HEK293 (cell line): ENCODE measurements at regions of chr6 and their contacts with region 1.

Region 1: GRCh38 chr6:127641905-127642304 is 64.9 kb downstream of the C6orf58 start:
- H3K4me3 ChIP-seq: no peak overlapping the region
- H3K27ac ChIP-seq: no peak overlapping the region
- H3K4me1 ChIP-seq: no peaks in the 10 kb centered on the region
- CTCF ChIP-seq: 0 out of 2 replicates have a peak, but pooled peaks have one; percentile 33

Region 2: GRCh38 chr6:127547215-127547614 is 94.7 kb before region 1 on chr6:
- CTCF ChIA-PET with region 1: interaction called, 16 read pairs
- POLR2A ChIA-PET with region 1: no interaction called
- H3K4me3 ChIP-seq: no peak overlapping the region
- H3K27ac ChIP-seq: no peak overlapping the region
- H3K4me1 ChIP-seq: no peaks in the 10 kb centered on the region
- CTCF ChIP-seq: no peak

Region 3: GRCh38 chr6:127554435-127555006 is 87.4 kb before region 1 on chr6:
- CTCF ChIA-PET with region 1: interaction called, 16 read pairs
- POLR2A ChIA-PET with region 1: no interaction called
- H3K4me3 ChIP-seq: no peak overlapping the region
- H3K27ac ChIP-seq: no peak overlapping the region
- H3K4me1 ChIP-seq: no peaks in the 10 kb centered on the region
- CTCF ChIP-seq: peak; percentile 29; the same call in 1 of the 2 replicates

Region 4: GRCh38 chr6:127586372-127586771 is 55.5 kb before region 1 on chr6:
- CTCF ChIA-PET with region 1: no interaction called
- POLR2A ChIA-PET with region 1: no interaction called
- H3K4me3 ChIP-seq: no peak overlapping the region
- H3K27ac ChIP-seq: no peak overlapping the region
- H3K4me1 ChIP-seq: no peaks in the 10 kb centered on the region
- CTCF ChIP-seq: no peak